ENCODE measurements at regions of chr5 and their contacts with region 1.

Region 1: GRCh38 chr5:68215208-68215897 is at the start of gene PIK3R1:
- DNase-seq: peak; percentile 96 to 98 (median 97)
- ATAC-seq: peak; percentile 84 to 97 (median 94)
- H3K4me3 ChIP-seq: peak within 1 kb of the TSS; percentile 77 to 97 (median 95)
- H3K27ac ChIP-seq: peak within 1 kb of the TSS; percentile 89 to 100 (median 98)
- H3K4me1 ChIP-seq: peaks cover 0 to 43% (median 24%) of the 10 kb centered on the region in 12 donors
- H3K27me3 ChIP-seq: no peaks in the 10 kb centered on the region
- CTCF ChIP-seq: peak in 10 of 12 donors; percentile 20 to 60 (median 40)
- POLR2A ChIP-seq: peak; percentile 72 to 98
- total RNA-seq, gene PIK3R1: 80.3 to 221 (median 147) TPM

Region 2: DNA sequence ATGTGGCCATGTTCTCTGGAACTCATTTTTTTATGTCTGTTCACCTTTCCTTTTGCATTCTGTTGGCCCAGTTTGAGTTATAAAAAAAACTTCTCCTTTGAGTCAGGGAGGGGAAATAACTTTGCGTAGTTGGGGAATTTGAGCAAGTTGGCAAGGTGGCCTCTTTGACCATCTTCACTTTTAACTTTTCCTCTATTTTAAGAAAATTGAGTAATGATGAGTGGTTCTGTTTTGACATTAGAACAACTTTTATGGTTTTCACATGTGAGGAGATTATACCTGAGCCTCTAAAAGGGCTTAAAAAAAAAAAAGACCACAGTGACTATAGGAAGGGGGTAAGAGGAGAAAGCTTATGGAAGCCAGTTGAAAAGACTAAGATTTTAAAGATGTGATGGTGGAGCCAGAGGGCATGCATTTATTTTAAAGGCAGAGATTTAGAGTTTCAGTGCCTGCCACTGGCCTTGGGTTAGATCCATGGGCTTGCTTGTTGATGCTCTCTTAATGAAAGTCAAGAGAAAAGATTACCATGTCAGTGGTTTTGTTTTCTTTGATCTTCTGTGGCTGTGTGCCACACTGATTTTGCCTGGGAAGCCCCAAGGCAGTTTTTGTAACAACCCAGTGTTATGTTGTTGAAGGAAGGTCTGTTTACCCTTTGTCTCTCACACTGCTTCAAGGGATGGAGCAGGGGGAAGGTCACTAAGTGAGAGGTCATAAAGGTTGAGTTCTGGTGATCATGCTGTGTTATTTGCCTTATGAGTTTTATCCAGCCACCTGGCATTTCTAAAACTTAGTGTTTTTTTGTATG is 799.0 kb before region 1 on chr5:
- intact Hi-C with region 1: no loop called
- DNase-seq: no peak
- ATAC-seq: no peak
- H3K4me3 ChIP-seq: no peak overlapping the region
- H3K27ac ChIP-seq: no peak overlapping the region
- H3K4me1 ChIP-seq: no peaks in the 10 kb centered on the region
- H3K27me3 ChIP-seq: no peaks in the 10 kb centered on the region
- CTCF ChIP-seq: no peak
- POLR2A ChIP-seq: no peak

Region 3: DNA sequence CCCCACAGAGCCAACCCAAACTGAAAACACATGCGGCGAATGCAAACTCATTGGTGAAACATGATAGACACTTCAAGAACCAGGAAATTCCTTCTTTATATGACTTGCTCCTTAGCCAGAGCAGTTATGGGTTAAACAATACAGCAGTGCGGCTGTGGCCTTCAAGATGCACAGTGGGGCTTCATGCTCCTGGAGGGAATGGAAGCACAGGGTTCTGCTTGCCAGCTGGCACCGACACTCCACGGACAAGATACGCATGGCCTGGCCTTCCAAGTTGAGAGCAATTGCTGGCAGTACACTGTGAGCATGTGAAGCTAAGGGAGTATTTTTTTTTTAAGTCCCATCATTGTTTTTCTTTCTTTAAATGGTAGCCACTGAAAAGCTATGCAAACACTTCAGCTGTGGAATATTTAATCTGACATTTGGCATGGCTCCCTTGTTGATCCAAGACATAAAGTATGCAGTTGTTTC is 567.1 kb before region 1 on chr5:
- intact Hi-C with region 1: loop called in 1 of 10 experiments (anchors 10 kb)
- DNase-seq: peak; percentile 75 to 90 (median 85)
- ATAC-seq: peak; percentile 97 to 98 (median 98)
- H3K4me3 ChIP-seq: no peak overlapping the region
- H3K27ac ChIP-seq: peak overlapping the region in 9 of 12 donors; percentile 44 to 87 (median 68)
- H3K4me1 ChIP-seq: peaks cover 0 to 38% (median 12%) of the 10 kb centered on the region in 12 donors
- H3K27me3 ChIP-seq: no peaks in the 10 kb centered on the region
- CTCF ChIP-seq: no peak
- POLR2A ChIP-seq: no peak

Region 4: DNA sequence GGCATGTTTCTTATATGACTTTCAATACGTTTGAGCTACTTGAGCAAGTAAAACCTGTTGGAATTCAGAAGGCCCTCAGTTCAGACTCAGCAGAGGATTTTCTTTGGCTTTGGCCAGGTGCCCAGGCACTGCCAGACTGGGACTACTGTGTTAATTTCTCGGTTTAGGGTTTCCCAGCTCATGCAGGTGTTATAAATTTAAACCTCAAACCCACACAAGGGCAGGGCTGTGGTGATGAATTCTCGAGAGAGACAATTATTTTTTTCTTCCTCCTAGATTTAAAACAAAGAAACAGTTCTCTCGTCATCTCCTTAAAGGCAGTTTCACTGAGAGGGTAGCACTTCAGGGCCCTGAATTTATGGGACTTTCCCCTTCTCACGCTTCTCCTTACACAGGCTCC is 405.8 kb before region 1 on chr5:
- intact Hi-C with region 1: loop called in 4 of 10 experiments (anchors 5 to 10 kb)
- DNase-seq: no peak
- ATAC-seq: no peak
- H3K4me3 ChIP-seq: no peak overlapping the region
- H3K27ac ChIP-seq: peak overlapping the region in 11 of 12 donors; percentile 6 to 90 (median 78)
- H3K4me1 ChIP-seq: peaks cover 0 to 42% (median 19%) of the 10 kb centered on the region in 12 donors
- H3K27me3 ChIP-seq: no peaks in the 10 kb centered on the region
- CTCF ChIP-seq: no peak
- POLR2A ChIP-seq: no peak

Region 5: DNA sequence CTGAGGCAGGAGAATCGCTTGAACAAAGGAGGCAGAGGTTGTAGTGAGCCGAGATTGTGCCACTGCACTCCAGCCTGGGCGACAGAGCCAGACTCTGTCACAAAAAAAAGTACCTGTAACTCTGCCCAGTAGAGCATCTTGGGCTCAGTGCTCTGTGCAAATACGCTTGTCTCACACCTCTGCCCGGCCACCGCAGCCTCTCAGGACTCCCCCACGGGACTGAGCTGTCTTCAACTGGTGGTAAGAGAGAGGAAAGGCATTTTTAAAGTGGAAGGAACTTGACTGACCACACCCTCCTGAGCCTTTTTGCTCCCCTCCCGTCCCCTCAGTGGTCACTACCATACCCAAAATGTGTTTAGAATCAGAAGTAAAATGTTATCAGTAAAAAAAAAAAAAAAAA is 174.1 kb before region 1 on chr5:
- intact Hi-C with region 1: loop called in 1 of 10 experiments (anchors 5 kb)
- DNase-seq: peak; percentile 9 to 63 (median 36)
- ATAC-seq: peak; percentile 51 to 84 (median 68)
- H3K4me3 ChIP-seq: no peak overlapping the region
- H3K27ac ChIP-seq: peak overlapping the region in 6 of 12 donors; percentile 17 to 89 (median 52)
- H3K4me1 ChIP-seq: peaks cover 0 to 39% (median 7%) of the 10 kb centered on the region in 12 donors
- H3K27me3 ChIP-seq: no peaks in the 10 kb centered on the region
- CTCF ChIP-seq: no peak
- POLR2A ChIP-seq: no peak

Region 6: DNA sequence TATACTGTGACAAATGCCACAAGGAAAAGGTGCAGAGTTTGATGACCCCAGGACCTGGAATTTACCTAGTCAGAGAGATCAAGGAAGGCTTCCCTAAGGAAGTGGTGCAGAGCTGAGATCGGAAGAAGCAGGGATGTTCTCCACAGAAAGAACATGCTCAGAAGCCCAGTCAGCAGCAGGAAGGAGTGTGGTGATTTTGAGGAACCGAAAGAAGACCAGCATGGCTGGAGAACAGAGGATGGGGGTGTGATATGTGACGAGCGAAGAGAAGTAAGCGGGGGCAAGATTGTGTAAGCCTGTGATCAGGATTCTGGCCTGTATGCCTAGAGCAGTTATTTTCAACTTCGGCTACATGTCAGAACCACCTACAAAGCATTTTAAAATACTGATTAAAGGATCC is 18.5 kb before region 1 on chr5:
- intact Hi-C with region 1: no loop called
- DNase-seq: peak in 3 of 5 donors; percentile 29 to 45 (median 38)
- ATAC-seq: peak in 3 of 4 donors; percentile 58 to 82 (median 68)
- H3K4me3 ChIP-seq: no peak overlapping the region
- H3K27ac ChIP-seq: peak overlapping the region in 2 of 12 donors; percentile 2 to 85
- H3K4me1 ChIP-seq: peaks cover 0 to 31% (median 9%) of the 10 kb centered on the region in 12 donors
- H3K27me3 ChIP-seq: no peaks in the 10 kb centered on the region
- CTCF ChIP-seq: no peak
- POLR2A ChIP-seq: no peak

Region 7: GRCh38 chr5:68252673-68253623 is 37.6 kb after region 1 on chr5:
- intact Hi-C with region 1: loop called (anchors 5 kb)
- DNase-seq: peak in 4 of 5 donors; percentile 50 to 61 (median 60)
- ATAC-seq: peak; percentile 37 to 79 (median 74)
- H3K4me3 ChIP-seq: peak overlapping the region in 6 of 12 donors; percentile 1 to 24 (median 8)
- H3K27ac ChIP-seq: peak overlapping the region; percentile 21 to 85 (median 77)
- H3K4me1 ChIP-seq: peaks cover 9 to 100% (median 98%) of the 10 kb centered on the region in 12 donors
- H3K27me3 ChIP-seq: no peaks in the 10 kb centered on the region
- CTCF ChIP-seq: peak; percentile 53 to 83 (median 76)
- POLR2A ChIP-seq: no peak

Region 8: DNA sequence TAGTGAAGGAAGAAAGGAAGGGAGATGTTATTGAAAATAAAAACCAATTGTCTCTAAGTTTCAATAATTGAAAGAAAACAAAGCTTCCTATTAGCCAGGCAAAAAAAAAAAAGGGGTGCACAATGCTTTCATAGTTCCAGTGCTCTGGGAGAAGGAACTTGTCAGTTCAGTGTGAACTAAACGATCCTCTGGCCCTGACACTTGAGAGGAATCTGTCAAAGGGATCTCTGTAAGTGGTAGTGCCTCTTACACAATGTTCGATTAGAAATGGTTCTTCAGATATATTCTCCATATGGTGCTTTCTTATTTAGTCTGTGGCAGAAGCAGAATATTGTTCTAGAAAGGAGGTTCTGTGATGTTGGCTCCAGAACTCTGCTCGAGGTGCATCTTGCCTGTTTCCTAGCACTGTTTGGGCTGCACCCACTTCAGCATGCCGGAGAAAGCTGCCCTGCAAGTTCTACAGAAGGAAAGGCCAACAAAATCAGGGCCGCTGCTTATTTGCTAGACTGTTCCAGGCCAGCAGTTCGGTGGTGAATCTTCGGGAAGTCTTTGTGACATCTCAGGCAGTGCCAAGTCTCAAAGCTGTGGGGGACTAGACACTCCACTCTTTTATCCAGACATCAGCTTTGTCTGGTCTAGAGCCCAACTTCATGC is 91.1 kb after region 1 on chr5:
- intact Hi-C with region 1: no loop called
- DNase-seq: no peak
- ATAC-seq: no peak
- H3K4me3 ChIP-seq: no peak overlapping the region
- H3K27ac ChIP-seq: no peak overlapping the region
- H3K4me1 ChIP-seq: peaks cover 0 to 12% (median 2%) of the 10 kb centered on the region in 12 donors
- H3K27me3 ChIP-seq: no peaks in the 10 kb centered on the region
- CTCF ChIP-seq: no peak
- POLR2A ChIP-seq: no peak